Activated CD4-positive, alpha-beta T cell treated with anti-CD3 and anti-CD28 coated beads, Interleukin-2, amount 10 ng/mL, durations not matched to agents 7 days and 5 days (primary cell): ENCODE measurements at regions of chr6 and their contacts with region 1.

Region 1: DNA sequence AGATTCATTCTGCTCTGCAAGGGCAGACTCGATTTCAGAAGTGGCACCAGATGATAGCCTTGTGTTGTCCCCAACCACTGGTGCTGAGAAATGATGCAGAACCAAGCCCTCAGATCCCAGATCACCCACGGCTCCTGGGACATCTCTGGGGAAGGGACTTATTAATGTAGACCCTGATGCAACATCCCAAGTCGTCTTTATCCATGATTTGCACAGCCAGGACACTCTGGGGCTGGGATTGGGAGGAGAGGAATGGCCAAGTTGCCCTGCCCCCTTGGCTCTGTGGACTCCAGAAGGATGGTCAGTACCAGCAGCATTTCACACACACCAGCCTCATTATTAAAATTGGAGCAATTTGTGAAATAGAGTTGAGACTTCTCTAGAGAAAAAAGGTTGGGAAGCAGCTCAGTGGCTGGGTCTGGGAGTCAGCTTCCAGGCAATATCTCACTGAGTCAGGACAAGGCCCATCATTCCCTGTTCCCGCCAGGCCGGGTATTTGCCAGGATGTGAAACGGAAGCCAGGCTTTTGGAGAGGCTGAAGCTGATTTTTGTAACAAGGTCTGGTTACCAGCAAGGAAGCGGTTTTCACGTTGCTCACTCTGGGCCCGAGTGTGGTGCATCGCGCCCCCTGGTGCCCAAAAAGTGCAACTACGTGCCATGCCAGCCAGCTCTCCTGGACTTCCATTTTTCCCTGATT is 67.4 kb downstream of the ZBTB2 start:
- DNase-seq: peak; percentile 75
- H3K4me3 Mint-ChIP-seq: no peak overlapping the region
- H3K27ac Mint-ChIP-seq: no peak overlapping the region
- H3K4me1 Mint-ChIP-seq: peaks cover 23% of the 10 kb centered on the region
- H3K27me3 Mint-ChIP-seq: peaks cover 47% of the 10 kb centered on the region

Region 2: DNA sequence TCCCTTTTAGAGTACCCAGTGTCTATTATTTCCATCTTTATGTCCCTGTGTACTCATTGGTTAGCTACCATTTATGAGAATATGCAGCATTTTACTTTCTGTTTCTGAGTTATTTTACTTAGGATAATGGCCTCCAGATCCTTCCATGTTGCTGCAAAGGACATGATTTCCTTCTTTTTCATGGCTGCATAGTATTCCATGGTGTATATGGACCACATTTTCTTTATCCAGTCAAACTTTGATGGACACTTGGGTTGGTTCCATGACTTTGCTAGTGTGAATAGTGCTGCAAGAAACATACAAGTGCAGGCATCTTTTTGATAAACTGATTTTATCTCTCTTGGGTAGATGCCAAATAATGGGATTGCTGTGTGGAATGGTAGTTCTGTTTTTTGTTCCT is 12.0 kb after region 1 on chr6:
- CTCF ChIA-PET with region 1: interaction called, 22 read pairs
- POLR2A ChIA-PET with region 1: no interaction called
- DNase-seq: no peak
- H3K4me3 Mint-ChIP-seq: no peak overlapping the region
- H3K27ac Mint-ChIP-seq: no peak overlapping the region
- H3K4me1 Mint-ChIP-seq: peaks cover 4% of the 10 kb centered on the region
- H3K27me3 Mint-ChIP-seq: no peaks in the 10 kb centered on the region

Region 3: GRCh38 chr6:151461673-151462072 is 137.7 kb after region 1 on chr6:
- CTCF ChIA-PET with region 1: no interaction called
- POLR2A ChIA-PET with region 1: no interaction called
- DNase-seq: no peak
- H3K4me3 Mint-ChIP-seq: no peak overlapping the region
- H3K27ac Mint-ChIP-seq: no peak overlapping the region
- H3K4me1 Mint-ChIP-seq: peaks cover 12% of the 10 kb centered on the region
- H3K27me3 Mint-ChIP-seq: no peaks in the 10 kb centered on the region

Region 4: DNA sequence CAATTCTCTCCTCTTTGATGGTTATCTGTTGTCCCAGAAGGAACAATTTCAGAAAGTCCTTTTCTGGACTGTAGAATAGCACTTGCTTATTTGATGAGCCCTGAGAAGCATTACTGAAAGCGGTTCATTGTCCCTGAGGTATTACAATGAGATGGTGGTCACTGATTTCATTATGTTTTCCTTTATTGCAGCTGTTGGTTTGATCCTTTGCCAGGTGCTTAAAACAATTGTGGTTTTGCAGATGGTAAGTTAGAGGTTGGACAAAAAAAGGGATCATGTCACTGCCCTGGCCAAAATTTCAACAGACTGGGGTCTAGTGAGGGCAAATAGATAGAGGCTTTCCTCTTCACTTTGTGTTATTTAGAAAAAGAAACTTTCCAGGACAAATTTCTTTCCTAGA is 545.4 kb after region 1 on chr6:
- CTCF ChIA-PET with region 1: no interaction called
- POLR2A ChIA-PET with region 1: no interaction called
- DNase-seq: no peak
- H3K4me3 Mint-ChIP-seq: no peak overlapping the region
- H3K27ac Mint-ChIP-seq: no peak overlapping the region
- H3K4me1 Mint-ChIP-seq: no peaks in the 10 kb centered on the region
- H3K27me3 Mint-ChIP-seq: no peaks in the 10 kb centered on the region